Upper lobe of right lung (tissue), 1 donor: ENCODE measurements at regions of chrX and their contacts with region 1.

Region 1: DNA sequence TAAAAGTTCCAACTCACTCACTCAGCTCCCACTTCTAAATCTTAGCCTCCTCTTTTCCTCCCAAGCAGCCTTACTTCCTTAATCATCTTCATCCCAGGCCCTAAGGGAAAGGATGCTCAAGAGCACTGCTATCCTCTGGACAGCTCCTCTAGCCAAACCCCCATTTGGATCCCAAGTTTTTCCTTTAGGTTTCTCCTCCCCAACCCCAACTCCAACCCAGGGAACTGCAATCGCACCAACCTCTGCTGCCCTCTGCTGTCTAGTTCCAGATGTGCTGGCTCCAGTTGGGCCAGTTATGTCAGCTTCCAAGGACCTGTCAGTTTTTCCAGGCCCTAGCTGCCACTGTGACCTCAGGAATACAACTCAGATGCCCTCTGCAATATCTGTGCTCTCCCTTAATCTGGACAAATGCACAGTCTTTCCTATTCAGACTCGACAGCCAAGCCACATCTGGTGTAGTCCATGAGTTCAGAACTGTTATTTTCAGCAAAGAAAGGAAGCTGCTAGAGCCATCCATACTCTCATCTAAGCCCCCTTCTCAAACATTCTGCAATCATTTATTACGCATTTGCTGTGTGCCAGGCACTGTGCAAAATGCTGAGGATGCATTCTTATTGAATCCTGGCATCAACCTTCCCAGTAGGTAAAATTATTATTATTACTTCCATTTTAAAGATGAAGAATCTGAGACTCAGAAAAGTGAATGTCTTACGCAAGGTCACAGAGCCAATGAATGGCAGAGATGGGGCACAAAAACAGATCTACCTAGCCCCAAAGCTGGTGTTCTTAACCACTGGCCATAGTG is 12.3 kb upstream of the XPNPEP2 start:
- DNase-seq: peak; percentile 66
- ATAC-seq: peak; percentile 88
- H3K4me3 ChIP-seq: no peak overlapping the region
- H3K27ac ChIP-seq: no peak overlapping the region
- H3K4me1 ChIP-seq: no peaks in the 10 kb centered on the region
- H3K27me3 ChIP-seq: no peaks in the 10 kb centered on the region
- CTCF ChIP-seq: peak; percentile 59

Region 2: DNA sequence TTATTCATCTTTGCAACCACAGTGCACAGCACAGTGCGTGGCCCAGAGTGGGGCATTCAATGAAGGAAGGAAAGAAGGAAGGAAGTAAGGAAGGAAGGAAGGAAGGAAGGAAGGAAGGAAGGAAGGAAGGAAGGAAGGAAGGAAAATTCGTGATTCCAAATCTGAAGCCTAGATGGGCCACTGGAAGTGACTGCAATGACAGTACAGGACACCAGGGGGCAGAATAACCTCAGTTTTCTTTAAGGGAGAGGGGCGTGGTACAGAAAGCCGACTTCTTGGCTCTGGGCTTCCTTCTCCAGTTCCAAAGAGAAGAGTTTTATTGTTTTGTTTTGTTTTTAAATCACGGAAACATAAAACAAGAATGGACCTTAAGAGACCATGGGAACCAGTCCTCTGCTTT is 119.6 kb before region 1 on chrX:
- intact Hi-C with region 1: loop called (anchors 10 kb)
- DNase-seq: no peak
- ATAC-seq: peak; percentile 79
- H3K4me3 ChIP-seq: no peak overlapping the region
- H3K27ac ChIP-seq: no peak overlapping the region
- H3K4me1 ChIP-seq: peaks cover 5% of the 10 kb centered on the region
- H3K27me3 ChIP-seq: no peaks in the 10 kb centered on the region
- CTCF ChIP-seq: peak; percentile 64

Region 3: DNA sequence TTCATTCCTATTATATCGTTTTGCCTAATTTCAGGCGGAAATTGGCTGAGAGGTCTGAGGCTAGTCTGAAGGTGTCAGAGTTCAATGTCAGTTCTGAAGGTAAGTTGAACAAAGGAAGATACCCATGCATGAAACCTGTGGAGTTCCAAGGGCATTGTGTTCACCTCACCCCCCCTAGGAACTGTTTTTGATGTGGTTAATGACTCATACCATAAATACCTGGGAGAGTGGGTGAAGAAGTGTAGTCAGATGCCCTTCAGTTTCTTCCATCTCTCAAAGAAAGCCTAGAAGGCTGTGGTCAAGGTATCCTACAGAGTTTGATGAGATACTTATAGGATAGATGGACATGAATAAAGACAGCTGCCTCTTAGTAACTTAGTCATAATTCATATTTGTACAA is 182.1 kb after region 1 on chrX:
- intact Hi-C with region 1: no loop called
- DNase-seq: no peak
- ATAC-seq: no peak
- H3K4me3 ChIP-seq: no peak overlapping the region
- H3K27ac ChIP-seq: no peak overlapping the region
- H3K4me1 ChIP-seq: peaks cover 4% of the 10 kb centered on the region
- H3K27me3 ChIP-seq: no peaks in the 10 kb centered on the region
- CTCF ChIP-seq: no peak